ENCODE measurements at regions of chr16 and their contacts with region 1.

Region 1: DNA sequence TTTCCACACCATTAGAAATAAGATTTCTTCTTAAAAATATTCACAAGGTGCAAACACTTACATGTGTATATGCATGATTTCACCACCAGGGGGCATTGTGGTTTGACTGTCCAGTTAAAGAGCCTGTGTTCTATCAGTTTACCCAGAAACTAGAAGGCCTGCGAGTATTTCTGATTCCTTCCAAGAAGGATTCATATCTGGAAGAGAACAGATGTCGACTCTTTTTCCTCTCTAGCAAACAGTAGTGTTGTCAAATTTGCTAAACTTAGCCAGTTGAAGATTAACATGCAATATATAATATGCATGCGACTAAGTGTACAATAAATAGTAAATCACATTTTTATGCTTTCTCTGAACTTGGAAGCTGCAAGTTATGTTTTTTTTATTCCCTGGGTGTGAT is 404.1 kb downstream of the WWOX start:
- DNase-seq: peak; percentile 79
- H3K4me3 ChIP-seq: no peak overlapping the region
- H3K27ac ChIP-seq: peak overlapping the region in 2 of 4 donors; percentile 71 to 72
- H3K4me1 ChIP-seq: peaks cover 0 to 38% (median 29%) of the 10 kb centered on the region in 4 donors
- H3K27me3 ChIP-seq: no peaks in the 10 kb centered on the region
- CTCF ChIP-seq: peak; percentile 74 to 85 (median 79)
- EP300 ChIP-seq: no peak
- POLR2A ChIP-seq: no peak

Region 2: DNA sequence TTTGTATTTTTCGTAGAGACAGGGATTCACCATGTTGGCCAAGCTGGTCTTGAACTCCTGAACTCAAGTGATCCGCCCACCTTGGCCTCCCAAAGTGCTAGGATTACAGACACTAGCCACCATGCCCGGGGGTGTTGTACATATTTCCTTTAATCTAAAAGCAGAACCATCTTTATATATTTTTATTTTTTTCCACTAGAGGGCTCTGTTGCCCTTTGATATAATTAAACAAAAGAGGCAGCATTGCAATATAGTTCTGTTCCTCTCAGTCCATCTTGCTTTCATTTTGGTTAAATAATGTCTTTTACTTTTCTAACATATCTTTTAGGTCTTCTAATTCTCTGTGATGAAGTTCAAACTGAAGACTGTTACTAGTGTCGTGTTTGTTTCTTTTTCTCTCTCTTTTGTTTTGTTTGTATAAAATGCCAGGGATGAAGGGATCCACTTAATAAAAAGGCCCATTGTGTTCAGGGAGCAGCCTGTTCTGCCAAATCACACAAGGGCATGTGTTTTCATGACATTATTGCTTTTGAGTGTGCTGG is 380.8 kb before region 1 on chr16:
- intact Hi-C with region 1: loop called (anchors 2 kb)
- DNase-seq: no peak
- H3K4me3 ChIP-seq: no peak overlapping the region
- H3K27ac ChIP-seq: peak overlapping the region in 2 of 4 donors; percentile 29 to 44
- H3K4me1 ChIP-seq: peaks cover 0 to 14% (median 10%) of the 10 kb centered on the region in 4 donors
- H3K27me3 ChIP-seq: no peaks in the 10 kb centered on the region
- CTCF ChIP-seq: peak in 3 of 4 experiments; percentile 42 to 51 (median 45)
- EP300 ChIP-seq: no peak
- POLR2A ChIP-seq: no peak

Region 3: DNA sequence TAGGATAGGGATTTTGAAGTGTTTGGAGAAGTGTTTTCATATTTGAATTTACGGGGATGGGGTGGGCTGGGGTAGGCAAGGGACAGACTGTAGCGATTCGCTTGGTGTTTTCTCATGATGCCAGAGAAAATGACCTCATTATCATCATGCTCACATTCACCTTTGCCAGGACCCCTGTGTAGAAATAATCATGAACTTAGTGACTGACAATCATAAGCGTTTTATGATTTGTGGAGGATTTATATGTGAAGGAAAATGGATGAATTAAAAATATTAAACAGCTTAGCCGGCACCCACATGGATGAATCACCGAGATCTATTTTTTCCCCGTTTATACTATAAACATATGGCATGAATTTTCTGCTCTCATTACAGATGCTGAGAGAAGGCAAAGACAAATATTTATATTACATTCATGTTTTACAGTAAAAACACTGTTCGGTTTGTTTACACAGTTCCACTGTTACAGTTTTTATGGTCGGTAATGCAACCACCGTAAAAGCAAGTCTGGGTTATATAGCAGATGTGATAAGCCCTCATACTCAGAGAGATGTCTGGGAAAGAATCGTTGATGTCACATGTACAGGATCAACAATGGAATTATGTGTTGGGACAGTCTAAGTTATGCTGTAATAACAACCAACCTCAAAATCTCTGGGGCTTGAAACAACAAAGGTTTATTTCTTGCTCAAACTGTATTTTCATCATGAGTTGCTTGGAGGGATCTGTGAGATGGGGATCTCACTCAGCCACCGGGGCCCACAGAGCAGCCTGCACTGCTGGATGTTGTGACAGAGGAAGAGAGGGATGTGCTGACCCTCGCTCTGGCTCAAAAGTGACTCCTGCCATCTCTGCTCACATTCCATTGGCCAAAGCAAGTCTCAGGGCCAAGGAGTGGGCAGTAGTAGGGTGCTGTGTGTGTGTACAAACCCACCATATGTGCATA is 319.1 kb before region 1 on chr16:
- intact Hi-C with region 1: no loop called
- DNase-seq: no peak
- H3K4me3 ChIP-seq: peak overlapping the region; percentile 8 to 33 (median 20)
- H3K27ac ChIP-seq: no peak overlapping the region
- H3K4me1 ChIP-seq: peaks cover 0 to 17% (median 12%) of the 10 kb centered on the region in 4 donors
- H3K27me3 ChIP-seq: no peaks in the 10 kb centered on the region
- CTCF ChIP-seq: no peak
- EP300 ChIP-seq: no peak
- POLR2A ChIP-seq: no peak

Region 4: GRCh38 chr16:78607486-78607885 is 103.9 kb after region 1 on chr16:
- intact Hi-C with region 1: loop called (anchors 10 kb)
- DNase-seq: no peak
- H3K4me3 ChIP-seq: peak overlapping the region in 1 of 4 donors; percentile 47
- H3K27ac ChIP-seq: peak overlapping the region; percentile 47 to 77 (median 60)
- H3K4me1 ChIP-seq: peaks cover 0 to 42% (median 28%) of the 10 kb centered on the region in 4 donors
- H3K27me3 ChIP-seq: no peaks in the 10 kb centered on the region
- CTCF ChIP-seq: no peak
- EP300 ChIP-seq: no peak
- POLR2A ChIP-seq: no peak

Region 5: GRCh38 chr16:78659216-78659942 is 155.8 kb after region 1 on chr16:
- intact Hi-C with region 1: no loop called
- DNase-seq: no peak
- H3K4me3 ChIP-seq: no peak overlapping the region
- H3K27ac ChIP-seq: no peak overlapping the region
- H3K4me1 ChIP-seq: no peaks in the 10 kb centered on the region
- H3K27me3 ChIP-seq: no peaks in the 10 kb centered on the region
- CTCF ChIP-seq: no peak
- EP300 ChIP-seq: no peak
- POLR2A ChIP-seq: no peak

Region 6: DNA sequence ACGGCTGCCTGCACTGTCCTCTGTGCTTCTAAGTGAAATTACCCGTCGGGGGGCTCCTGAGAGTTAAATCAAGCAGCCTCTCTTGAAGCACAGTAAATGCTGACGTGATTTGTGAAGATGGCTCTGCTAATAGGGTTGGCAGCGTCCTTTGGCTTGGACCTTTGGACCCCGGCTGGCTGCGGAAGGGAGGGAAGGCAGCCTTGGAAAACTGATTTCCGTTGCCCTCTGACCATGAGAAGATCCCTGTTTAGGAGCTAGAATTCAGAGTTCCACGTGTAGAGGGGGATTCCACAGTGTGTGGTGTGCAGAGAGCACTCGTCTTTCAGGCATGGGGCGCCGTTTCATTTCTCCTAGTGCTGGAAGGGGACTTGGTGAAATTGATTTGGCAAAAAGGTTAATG is 236.7 kb after region 1 on chr16:
- intact Hi-C with region 1: no loop called
- DNase-seq: no peak
- H3K4me3 ChIP-seq: no peak overlapping the region
- H3K27ac ChIP-seq: no peak overlapping the region
- H3K4me1 ChIP-seq: peaks cover 0 to 11% (median 9%) of the 10 kb centered on the region in 4 donors
- H3K27me3 ChIP-seq: no peaks in the 10 kb centered on the region
- CTCF ChIP-seq: no peak
- EP300 ChIP-seq: no peak
- POLR2A ChIP-seq: no peak

Region 7: DNA sequence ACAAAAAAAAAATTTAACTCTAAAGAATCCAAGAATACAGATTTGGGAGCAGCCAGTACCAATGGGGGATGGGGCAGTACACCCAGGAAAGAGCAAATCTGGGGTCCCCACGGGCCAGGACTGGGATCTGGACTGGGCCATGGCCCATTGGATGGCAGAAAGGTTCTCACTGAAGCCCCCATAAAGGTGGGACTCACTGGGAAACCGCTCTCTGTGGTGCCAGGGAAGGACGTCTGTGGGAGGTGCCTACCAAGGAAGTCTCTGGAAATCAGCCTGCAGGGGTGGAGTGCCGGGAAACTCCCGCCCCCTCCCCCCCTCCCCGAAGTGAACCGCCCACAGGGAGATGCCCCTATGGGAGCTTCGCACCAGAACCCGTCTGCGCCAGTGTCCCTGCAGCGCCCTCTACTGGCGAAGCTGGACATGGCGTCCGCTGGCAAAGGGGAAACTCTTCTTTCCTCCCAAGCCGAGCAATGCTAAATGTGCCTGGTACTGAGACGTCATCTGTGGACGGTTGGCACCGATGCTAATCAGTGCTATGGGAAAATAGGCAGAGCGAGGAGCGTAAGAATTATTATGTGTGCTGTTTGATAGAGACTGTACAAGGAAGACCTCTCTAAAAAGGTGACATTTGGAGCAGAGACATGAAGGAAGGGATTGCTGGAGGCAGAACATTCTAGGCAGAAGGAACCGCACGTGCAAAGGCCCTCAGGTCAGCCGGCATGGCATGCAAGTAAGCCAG is 266.9 kb after region 1 on chr16:
- intact Hi-C with region 1: loop called (anchors 5 kb)
- DNase-seq: peak; percentile 71
- H3K4me3 ChIP-seq: no peak overlapping the region
- H3K27ac ChIP-seq: no peak overlapping the region
- H3K4me1 ChIP-seq: peaks cover 0 to 7% (median 0%) of the 10 kb centered on the region in 4 donors
- H3K27me3 ChIP-seq: no peaks in the 10 kb centered on the region
- CTCF ChIP-seq: peak in 3 of 4 experiments; percentile 48 to 79 (median 58)
- EP300 ChIP-seq: no peak
- POLR2A ChIP-seq: no peak

Region 8: GRCh38 chr16:80084685-80085084 is 1581.1 kb after region 1 on chr16:
- intact Hi-C with region 1: loop called (anchors 5 kb)
- DNase-seq: peak; percentile 82
- H3K4me3 ChIP-seq: no peak overlapping the region
- H3K27ac ChIP-seq: no peak overlapping the region
- H3K4me1 ChIP-seq: peaks cover 0 to 6% (median 2%) of the 10 kb centered on the region in 4 donors
- H3K27me3 ChIP-seq: no peaks in the 10 kb centered on the region
- CTCF ChIP-seq: peak in 3 of 4 experiments; percentile 54 to 74 (median 73)
- EP300 ChIP-seq: no peak
- POLR2A ChIP-seq: no peak

Region 9: GRCh38 chr16:80466024-80466987 is 1962.7 kb after region 1 on chr16:
- intact Hi-C with region 1: loop called (anchors 5 kb)
- DNase-seq: peak; percentile 74
- H3K4me3 ChIP-seq: no peak overlapping the region
- H3K27ac ChIP-seq: no peak overlapping the region
- H3K4me1 ChIP-seq: peaks cover 0 to 6% (median 3%) of the 10 kb centered on the region in 4 donors
- H3K27me3 ChIP-seq: peaks cover 0 to 7% (median 0%) of the 10 kb centered on the region in 3 donors
- CTCF ChIP-seq: peak; percentile 32 to 69 (median 58)
- EP300 ChIP-seq: no peak
- POLR2A ChIP-seq: no peak